Gastrocnemius medialis (tissue), 4 donors: ENCODE measurements at regions of chr7 and their contacts with region 1.

Region 1: DNA sequence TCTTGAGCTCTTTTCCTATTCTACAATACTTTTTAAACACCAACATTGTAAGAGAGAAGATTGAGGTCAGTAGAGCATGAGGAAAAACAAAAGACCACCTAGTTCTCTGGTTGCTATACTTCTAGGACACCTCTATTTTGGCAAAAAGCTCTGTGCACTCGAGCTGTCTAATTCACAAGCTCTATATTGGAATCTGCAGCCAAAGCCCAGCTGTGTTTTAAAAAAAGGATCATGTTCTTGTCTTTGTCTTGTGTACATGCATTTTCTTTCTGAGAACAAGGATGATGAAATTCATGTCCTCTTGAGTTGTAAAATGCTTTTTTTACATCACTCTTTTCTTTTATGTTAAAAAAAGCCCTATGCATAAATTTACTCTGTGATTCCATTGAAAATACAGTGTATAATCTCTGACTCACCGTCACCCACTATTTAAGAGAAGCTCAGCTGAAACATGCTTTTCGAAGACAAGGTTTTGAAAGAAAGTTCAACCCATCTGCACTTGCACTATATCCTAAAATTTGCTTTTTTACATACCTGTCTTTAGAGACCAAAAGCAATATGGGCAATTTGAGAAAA is 215.5 kb upstream of the VSTM2A start:
- DNase-seq: no peak
- ATAC-seq: no peak
- H3K4me3 ChIP-seq: no peak overlapping the region
- H3K27ac ChIP-seq: no peak overlapping the region
- H3K4me1 ChIP-seq: no peaks in the 10 kb centered on the region
- H3K27me3 ChIP-seq: no peaks in the 10 kb centered on the region
- CTCF ChIP-seq: no peak
- POLR2A ChIP-seq: no peak

Region 2: DNA sequence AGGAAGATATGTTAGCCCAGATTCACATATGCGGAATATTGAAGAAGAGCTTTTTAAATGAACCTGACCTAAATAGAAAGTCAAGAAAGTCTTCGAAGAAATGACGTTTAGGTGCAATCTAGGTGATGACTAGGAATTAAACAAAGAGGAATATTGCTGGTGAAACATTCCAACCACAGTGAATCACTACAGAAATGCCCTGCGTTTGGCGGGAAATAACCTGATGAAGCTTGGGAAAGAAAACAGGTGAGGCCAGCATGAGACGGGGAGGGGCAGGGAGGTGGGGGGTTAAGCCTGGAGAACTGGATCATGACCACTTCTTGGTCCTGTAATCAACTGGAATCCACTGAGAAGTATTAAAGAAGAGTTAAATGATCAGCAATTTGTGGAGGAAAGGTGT is 83.9 kb before region 1 on chr7:
- in situ Hi-C with region 1: loop called in 1 of 4 experiments (anchors 10 kb)
- intact Hi-C with region 1: no loop called
- DNase-seq: no peak
- ATAC-seq: no peak
- H3K4me3 ChIP-seq: no peak overlapping the region
- H3K27ac ChIP-seq: no peak overlapping the region
- H3K4me1 ChIP-seq: no peaks in the 10 kb centered on the region
- H3K27me3 ChIP-seq: no peaks in the 10 kb centered on the region
- CTCF ChIP-seq: no peak
- POLR2A ChIP-seq: no peak

Region 3: GRCh38 chr7:54299426-54299825 is 27.3 kb before region 1 on chr7:
- in situ Hi-C with region 1: no loop called
- intact Hi-C with region 1: no loop called
- DNase-seq: no peak
- ATAC-seq: no peak
- H3K4me3 ChIP-seq: no peak overlapping the region
- H3K27ac ChIP-seq: no peak overlapping the region
- H3K4me1 ChIP-seq: no peaks in the 10 kb centered on the region
- H3K27me3 ChIP-seq: no peaks in the 10 kb centered on the region
- CTCF ChIP-seq: no peak
- POLR2A ChIP-seq: no peak